GM12878 (cell line): ENCODE measurements at regions of chr1 and their contacts with region 1.

Region 1: DNA sequence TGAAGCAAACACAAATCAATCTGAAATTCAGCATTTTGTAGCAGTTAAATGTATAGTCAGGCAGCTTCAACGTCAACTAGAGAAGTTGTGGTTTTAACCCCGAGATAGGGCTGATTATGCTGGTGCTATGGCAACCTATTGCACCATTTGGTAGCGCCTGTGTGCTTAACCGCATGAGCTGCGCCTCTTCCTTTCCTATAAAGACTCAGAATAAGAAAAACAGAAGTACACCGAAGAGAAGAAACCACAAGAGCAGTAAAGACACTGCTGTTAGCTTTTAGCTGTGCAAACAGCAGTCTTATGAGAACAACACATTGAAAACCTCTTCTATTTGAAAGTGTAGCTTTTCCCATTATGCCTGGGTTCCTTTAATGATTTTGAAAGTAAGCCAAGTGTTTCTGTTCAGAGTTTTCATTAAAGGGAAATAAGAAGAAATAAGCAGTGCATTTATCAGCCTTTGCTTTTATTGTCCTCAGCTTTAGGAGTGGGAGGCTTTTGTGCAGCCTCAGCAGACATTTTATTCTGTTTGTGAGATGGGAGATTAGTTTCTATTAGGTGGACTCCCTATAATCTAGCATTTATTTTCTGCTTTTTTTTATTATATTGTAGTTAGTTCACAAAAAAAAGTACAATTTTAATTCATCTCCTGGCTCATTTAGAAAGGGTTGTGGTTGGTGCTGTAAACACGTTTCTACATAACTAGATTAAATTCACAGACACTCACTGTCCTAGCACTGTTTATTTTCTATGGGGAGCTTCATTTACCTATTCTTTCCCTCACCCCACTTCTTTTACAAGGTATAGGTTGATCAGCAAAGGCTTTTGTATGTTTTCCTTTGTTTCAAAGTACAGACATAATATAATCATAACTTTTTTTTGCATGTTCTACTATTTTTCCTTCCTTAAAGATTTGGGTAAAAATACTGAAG is 43.3 kb downstream of the PTPRC start:
- DNase-seq: peak; percentile 97
- ATAC-seq: peak; percentile 93
- H3K4me3 ChIP-seq: peak overlapping the region; percentile 12; the same call in 1 of the 2 replicates
- H3K27ac ChIP-seq: peak overlapping the region; percentile 81
- H3K4me1 ChIP-seq: peaks cover 63% of the 10 kb centered on the region
- H3K27me3 ChIP-seq: no peaks in the 10 kb centered on the region
- CTCF ChIP-seq: no peak
- EP300 ChIP-seq: peak; percentile 77 to 98
- POLR2A ChIP-seq: peak; percentile 48
- RAD21 ChIP-seq: peak; percentile 32

Region 2: DNA sequence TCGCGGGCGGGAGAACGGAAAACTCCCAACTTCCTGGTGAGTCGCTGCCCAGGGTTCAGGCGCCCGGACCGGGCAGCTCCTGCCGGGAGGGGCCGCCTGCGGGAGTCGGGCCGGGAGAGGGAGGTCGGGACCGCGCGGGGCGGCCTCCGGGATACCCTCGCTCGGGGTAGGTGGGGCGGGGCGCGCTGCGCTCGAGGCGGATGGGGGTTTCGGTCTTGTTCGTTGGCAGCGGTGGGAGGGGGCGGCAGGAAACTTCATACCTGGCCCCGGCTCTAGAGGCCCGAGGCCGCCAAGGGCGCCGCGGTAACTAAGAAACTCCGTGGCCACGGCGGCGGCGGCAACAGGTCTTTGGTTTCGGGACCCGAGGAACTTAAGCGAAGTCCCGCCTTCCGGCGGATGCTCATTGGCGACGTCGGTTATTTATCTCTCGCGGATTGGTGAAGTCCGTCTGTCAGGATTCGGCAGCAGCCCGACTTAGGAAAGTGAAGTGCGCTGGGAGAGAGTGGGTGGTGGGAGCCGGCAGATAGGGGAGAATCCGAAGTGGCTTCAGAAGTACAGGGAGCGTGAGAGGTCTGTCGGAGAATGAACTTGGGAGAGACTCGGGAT is 524.8 kb before region 1 on chr1:
- CTCF ChIA-PET with region 1: interaction called, 4 read pairs
- POLR2A ChIA-PET with region 1: interaction called, 4 read pairs
- RAD21 ChIA-PET with region 1: interaction called, 4 read pairs
- SMC1A ChIA-PET with region 1: interaction called, 3 read pairs
- in situ Hi-C with region 1: loop called (anchors 10 kb)
- intact Hi-C with region 1: loop called (anchors 5 kb)
- DNase-seq: no peak
- ATAC-seq: peak; percentile 59
- H3K4me3 ChIP-seq: peak overlapping the region; percentile 95
- H3K27ac ChIP-seq: peak overlapping the region; percentile 91
- H3K4me1 ChIP-seq: peaks cover 12% of the 10 kb centered on the region; the same call in 1 of the 2 replicates
- H3K27me3 ChIP-seq: no peaks in the 10 kb centered on the region
- CTCF ChIP-seq: no peak
- EP300 ChIP-seq: no peak
- POLR2A ChIP-seq: peak; percentile 69
- RAD21 ChIP-seq: no peak

Region 3: GRCh38 chr1:198472113-198472512 is 210.0 kb before region 1 on chr1:
- CTCF ChIA-PET with region 1: interaction called, 48 read pairs
- POLR2A ChIA-PET with region 1: no interaction called
- RAD21 ChIA-PET with region 1: interaction called, 36 read pairs
- SMC1A ChIA-PET with region 1: interaction called, 12 read pairs
- in situ Hi-C with region 1: no loop called
- intact Hi-C with region 1: no loop called
- DNase-seq: no peak
- ATAC-seq: no peak
- H3K4me3 ChIP-seq: no peak overlapping the region
- H3K27ac ChIP-seq: no peak overlapping the region
- H3K4me1 ChIP-seq: no peaks in the 10 kb centered on the region
- H3K27me3 ChIP-seq: no peaks in the 10 kb centered on the region
- CTCF ChIP-seq: no peak
- EP300 ChIP-seq: no peak
- POLR2A ChIP-seq: no peak
- RAD21 ChIP-seq: no peak

Region 4: GRCh38 chr1:198606020-198606438 is 76.1 kb before region 1 on chr1:
- CTCF ChIA-PET with region 1: interaction called, 6 read pairs
- POLR2A ChIA-PET with region 1: interaction called, 4 read pairs
- RAD21 ChIA-PET with region 1: interaction called, 61 read pairs
- SMC1A ChIA-PET with region 1: interaction called, 83 read pairs
- in situ Hi-C with region 1: no loop called
- intact Hi-C with region 1: no loop called
- DNase-seq: no peak
- ATAC-seq: no peak
- H3K4me3 ChIP-seq: no peak overlapping the region
- H3K27ac ChIP-seq: no peak overlapping the region
- H3K4me1 ChIP-seq: peaks cover 3% of the 10 kb centered on the region; the same call in 1 of the 2 replicates
- H3K27me3 ChIP-seq: no peaks in the 10 kb centered on the region
- CTCF ChIP-seq: no peak
- EP300 ChIP-seq: no peak
- POLR2A ChIP-seq: no peak
- RAD21 ChIP-seq: no peak

Region 5: DNA sequence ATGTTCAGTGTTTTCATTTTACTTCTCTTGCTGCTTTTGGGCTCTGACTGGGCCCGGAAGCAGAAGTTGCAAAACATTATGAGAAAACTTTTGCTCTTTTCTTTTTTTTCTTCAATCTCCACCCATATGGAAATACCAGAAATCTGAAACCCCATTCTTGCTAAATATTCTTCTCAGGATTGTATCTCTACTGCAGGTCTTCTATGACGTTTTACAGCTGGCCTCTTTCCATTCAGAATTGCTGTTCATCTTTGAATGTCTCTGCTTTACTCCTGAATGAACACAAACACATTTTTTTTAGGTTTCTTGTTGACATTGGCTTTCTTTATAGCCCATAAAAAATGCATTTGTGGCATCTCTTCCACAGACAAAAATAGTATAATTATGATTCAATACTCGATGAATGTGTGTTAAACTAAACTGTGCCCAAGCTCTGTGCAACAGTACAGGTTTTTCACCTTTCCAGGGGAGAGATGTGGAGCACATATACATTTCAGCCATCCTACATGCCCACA is 24.5 kb before region 1 on chr1:
- CTCF ChIA-PET with region 1: interaction called, 10 read pairs
- POLR2A ChIA-PET with region 1: interaction called, 6 read pairs
- RAD21 ChIA-PET with region 1: interaction called, 26 read pairs
- SMC1A ChIA-PET with region 1: interaction called, 35 read pairs
- in situ Hi-C with region 1: no loop called
- intact Hi-C with region 1: no loop called
- DNase-seq: no peak
- ATAC-seq: peak; percentile 18
- H3K4me3 ChIP-seq: peak overlapping the region; percentile 9; the same call in 1 of the 2 replicates
- H3K27ac ChIP-seq: peak overlapping the region; percentile 74
- H3K4me1 ChIP-seq: peaks cover 32% of the 10 kb centered on the region
- H3K27me3 ChIP-seq: no peaks in the 10 kb centered on the region
- CTCF ChIP-seq: no peak
- EP300 ChIP-seq: no peak
- POLR2A ChIP-seq: no peak
- RAD21 ChIP-seq: no peak

Region 6: GRCh38 chr1:198749279-198749678 is 67.2 kb after region 1 on chr1:
- CTCF ChIA-PET with region 1: no interaction called
- POLR2A ChIA-PET with region 1: no interaction called
- RAD21 ChIA-PET with region 1: no interaction called
- SMC1A ChIA-PET with region 1: no interaction called
- in situ Hi-C with region 1: no loop called
- intact Hi-C with region 1: no loop called
- DNase-seq: no peak
- ATAC-seq: no peak
- H3K4me3 ChIP-seq: no peak overlapping the region
- H3K27ac ChIP-seq: no peak overlapping the region
- H3K4me1 ChIP-seq: no peaks in the 10 kb centered on the region
- H3K27me3 ChIP-seq: no peaks in the 10 kb centered on the region
- CTCF ChIP-seq: no peak
- EP300 ChIP-seq: no peak
- POLR2A ChIP-seq: no peak
- RAD21 ChIP-seq: no peak

Region 7: DNA sequence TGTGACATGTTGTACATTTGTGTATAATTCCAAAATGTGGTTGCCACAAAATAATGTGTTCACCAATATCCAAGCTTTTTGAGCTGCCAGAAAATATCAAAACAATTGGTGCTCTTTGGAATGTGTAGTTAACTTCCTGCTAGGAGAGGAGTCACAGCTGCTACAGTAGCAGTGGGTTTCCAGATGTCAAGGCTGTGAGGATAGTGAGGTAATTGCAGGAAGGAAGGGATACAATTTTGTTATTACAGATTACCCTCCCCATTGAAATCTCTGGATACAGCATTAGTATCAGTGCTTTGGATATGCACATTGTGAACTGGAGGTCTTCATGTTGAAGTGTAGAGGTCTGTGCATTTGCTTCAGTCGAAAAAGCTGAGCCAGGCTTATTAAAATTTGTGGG is 210.0 kb after region 1 on chr1:
- CTCF ChIA-PET with region 1: no interaction called
- POLR2A ChIA-PET with region 1: no interaction called
- RAD21 ChIA-PET with region 1: no interaction called
- SMC1A ChIA-PET with region 1: no interaction called
- in situ Hi-C with region 1: no loop called
- intact Hi-C with region 1: no loop called
- DNase-seq: no peak
- ATAC-seq: no peak
- H3K4me3 ChIP-seq: no peak overlapping the region
- H3K27ac ChIP-seq: no peak overlapping the region
- H3K4me1 ChIP-seq: no peaks in the 10 kb centered on the region
- H3K27me3 ChIP-seq: no peaks in the 10 kb centered on the region
- CTCF ChIP-seq: no peak
- EP300 ChIP-seq: no peak
- POLR2A ChIP-seq: no peak
- RAD21 ChIP-seq: no peak

Region 8: DNA sequence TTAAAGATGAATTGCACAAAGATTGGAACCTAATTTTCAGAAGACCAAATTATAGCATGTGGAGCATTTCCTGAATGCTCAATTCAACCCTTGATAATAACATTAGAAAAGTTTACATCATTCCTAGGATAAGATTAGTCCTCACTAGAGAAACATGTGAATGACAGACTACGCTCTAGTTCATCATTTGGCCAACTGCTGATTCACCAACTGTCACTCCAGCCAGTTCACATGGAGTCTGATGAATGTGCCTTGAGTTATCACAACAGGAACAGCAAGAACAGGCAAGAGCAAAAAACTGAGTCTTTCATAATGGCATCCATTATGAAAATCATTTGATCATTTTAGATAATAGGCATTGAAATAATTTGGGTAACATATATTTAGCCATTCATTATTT is 372.6 kb after region 1 on chr1:
- CTCF ChIA-PET with region 1: no interaction called
- POLR2A ChIA-PET with region 1: no interaction called
- RAD21 ChIA-PET with region 1: no interaction called
- SMC1A ChIA-PET with region 1: no interaction called
- in situ Hi-C with region 1: no loop called
- intact Hi-C with region 1: no loop called
- DNase-seq: no peak
- ATAC-seq: no peak
- H3K4me3 ChIP-seq: no peak overlapping the region
- H3K27ac ChIP-seq: no peak overlapping the region
- H3K4me1 ChIP-seq: no peaks in the 10 kb centered on the region
- H3K27me3 ChIP-seq: no peaks in the 10 kb centered on the region
- CTCF ChIP-seq: no peak
- EP300 ChIP-seq: no peak
- POLR2A ChIP-seq: no peak
- RAD21 ChIP-seq: no peak